AG04449 (cell line): ENCODE measurements at regions of chr14 and their contacts with region 1.

Region 1: GRCh38 chr14:90758028-90758889 is 58.0 kb downstream of the TTC7B start:
- DNase-seq: peak; percentile 16
- H3K4me3 ChIP-seq: peak overlapping the region; percentile 74
- CTCF ChIP-seq: peak; percentile 97

Region 2: GRCh38 chr14:90281261-90281660 is 477.0 kb before region 1 on chr14:
- CTCF ChIA-PET with region 1: interaction called, 12 read pairs
- POLR2A ChIA-PET with region 1: no interaction called
- DNase-seq: no peak
- H3K4me3 ChIP-seq: peak overlapping the region; percentile 12; the same call in 1 of the 2 replicates
- CTCF ChIP-seq: no peak

Region 3: DNA sequence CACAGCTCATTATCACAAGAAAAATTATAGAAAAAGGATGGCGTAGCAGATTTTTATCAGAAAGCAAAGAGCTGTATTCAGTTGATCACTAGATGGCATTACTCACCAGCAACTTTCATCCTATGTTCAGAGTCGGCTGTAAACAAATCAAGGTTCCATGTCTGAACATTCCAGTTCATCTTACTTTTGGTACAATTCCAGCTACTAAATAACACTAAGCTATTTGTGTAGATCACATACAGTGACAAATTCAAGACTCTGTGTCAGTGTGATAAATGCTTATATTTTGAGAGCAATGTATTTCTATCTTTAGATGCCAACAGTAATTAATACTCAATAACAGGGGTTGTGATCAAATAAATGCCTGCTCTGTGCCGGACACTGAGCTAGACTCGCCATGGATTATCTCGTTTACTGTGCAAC is 456.6 kb before region 1 on chr14:
- CTCF ChIA-PET with region 1: interaction called, 74 read pairs
- POLR2A ChIA-PET with region 1: interaction called, 3 read pairs
- DNase-seq: peak; percentile 38
- H3K4me3 ChIP-seq: no peak overlapping the region
- CTCF ChIP-seq: peak; percentile 45

Region 4: DNA sequence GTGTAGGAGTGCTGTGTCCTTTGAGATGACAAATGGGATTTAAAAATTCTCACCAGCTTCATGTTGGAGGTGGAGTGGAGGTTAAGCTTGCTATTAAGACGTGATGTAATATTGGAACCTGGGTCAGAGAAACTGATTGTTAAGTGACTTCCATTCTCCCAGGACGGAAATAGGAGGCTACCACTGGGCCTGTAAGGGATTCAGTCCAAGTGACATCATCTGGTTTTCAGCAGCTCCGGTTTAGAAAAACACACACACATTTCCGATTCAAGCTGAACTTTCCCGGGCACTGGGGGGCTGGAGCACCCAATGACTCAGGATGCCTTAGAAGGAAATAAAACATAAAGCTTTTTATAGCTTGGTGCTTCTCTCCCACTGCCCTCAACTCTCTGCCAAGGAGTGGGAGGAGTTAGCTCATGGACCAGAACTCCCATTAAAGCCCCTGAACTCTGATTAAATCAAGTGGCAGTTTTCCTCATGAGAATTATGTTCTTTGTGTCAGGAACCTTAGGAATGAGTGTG is 349.0 kb before region 1 on chr14:
- CTCF ChIA-PET with region 1: interaction called, 90 read pairs
- POLR2A ChIA-PET with region 1: interaction called, 7 read pairs
- DNase-seq: peak; percentile 92
- H3K4me3 ChIP-seq: no peak overlapping the region
- CTCF ChIP-seq: no peak

Region 5: DNA sequence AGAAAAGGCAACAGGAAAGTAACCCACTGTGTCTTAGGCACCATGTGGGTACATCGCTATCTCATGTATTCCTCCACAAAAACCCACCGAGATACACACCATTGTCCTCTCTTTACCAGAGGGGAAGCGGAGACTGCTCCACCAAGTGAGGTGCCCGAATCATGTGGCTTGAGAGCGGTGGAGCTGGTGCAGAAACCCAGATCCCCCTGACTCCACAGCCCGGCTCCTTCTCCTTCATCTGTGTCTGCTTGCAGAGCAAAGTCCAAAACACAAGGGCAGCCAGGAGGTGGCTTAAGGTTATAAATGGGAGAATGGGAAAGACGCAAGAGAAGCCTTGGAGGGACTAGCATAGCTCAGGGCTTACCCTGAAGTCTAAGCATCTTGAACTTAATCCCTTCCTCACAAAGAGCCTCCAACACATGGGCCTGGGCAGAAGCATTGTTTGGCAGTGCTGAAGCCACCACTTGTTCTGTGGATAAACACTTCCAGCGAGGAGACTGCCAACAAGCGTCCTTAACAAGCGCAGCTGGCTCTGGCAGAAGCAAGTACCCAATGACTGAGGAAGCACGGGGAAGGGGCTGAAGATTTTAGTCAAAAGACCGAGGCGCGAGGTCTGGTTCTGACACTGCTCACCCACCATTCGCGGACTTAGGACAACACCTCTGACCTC is 25.0 kb before region 1 on chr14:
- CTCF ChIA-PET with region 1: interaction called, 22 read pairs
- POLR2A ChIA-PET with region 1: no interaction called
- DNase-seq: no peak
- H3K4me3 ChIP-seq: no peak overlapping the region
- CTCF ChIP-seq: no peak

Region 6: DNA sequence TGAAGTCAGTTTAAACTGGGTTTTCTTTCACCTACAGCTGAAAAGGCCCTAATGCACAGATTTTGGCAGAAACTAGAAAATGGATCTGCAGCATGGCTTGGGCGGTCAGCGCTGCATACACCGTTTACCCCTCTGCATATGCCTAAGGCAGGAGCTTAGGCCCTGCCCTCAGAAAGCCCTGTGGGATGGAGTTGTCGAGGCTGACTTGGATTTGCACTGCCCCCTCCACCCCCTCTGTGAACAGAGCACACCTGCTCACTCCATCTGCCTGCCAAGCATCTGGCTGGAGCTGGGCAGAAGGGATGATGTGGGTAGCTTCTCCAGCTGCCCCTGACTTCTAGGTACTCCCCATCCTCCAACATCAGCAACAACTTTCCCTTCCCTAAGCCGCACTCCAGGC is 16.1 kb after region 1 on chr14:
- CTCF ChIA-PET with region 1: interaction called, 96 read pairs
- POLR2A ChIA-PET with region 1: no interaction called
- DNase-seq: no peak
- H3K4me3 ChIP-seq: no peak overlapping the region
- CTCF ChIP-seq: no peak

Region 7: DNA sequence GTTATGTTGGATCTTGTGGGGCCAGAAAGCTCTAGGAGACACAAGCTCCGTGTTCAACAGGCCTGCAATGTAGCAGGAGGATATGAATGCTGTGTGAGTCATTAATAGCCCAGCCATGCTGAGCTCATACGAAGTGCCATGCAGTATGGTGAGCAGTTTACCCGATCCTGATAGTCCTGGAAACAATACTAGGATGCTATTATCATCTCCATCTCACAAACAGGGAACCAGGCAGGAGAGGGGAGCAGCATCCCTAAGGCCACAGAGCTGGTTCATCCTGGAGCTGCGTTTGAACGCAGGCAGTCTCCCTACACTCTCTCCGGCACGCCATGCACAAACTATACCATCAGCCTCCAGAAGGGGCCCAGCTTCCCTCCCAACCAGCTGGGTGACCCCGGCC is 37.5 kb after region 1 on chr14:
- CTCF ChIA-PET with region 1: interaction called, 30 read pairs
- POLR2A ChIA-PET with region 1: no interaction called
- DNase-seq: peak; percentile 67
- H3K4me3 ChIP-seq: no peak overlapping the region
- CTCF ChIP-seq: no peak

Region 8: GRCh38 chr14:91193069-91193468 is 434.8 kb after region 1 on chr14:
- CTCF ChIA-PET with region 1: no interaction called
- POLR2A ChIA-PET with region 1: no interaction called
- DNase-seq: no peak
- H3K4me3 ChIP-seq: no peak overlapping the region
- CTCF ChIP-seq: no peak